Right ventricle myocardium inferior (tissue), 1 donor: ENCODE measurements at regions of chr11 and their contacts with region 1.

Region 1: GRCh38 chr11:78228467-78228866 is 39.7 kb downstream of the USP35 start:
- DNase-seq: no peak
- ATAC-seq: peak; percentile 49

Region 2: DNA sequence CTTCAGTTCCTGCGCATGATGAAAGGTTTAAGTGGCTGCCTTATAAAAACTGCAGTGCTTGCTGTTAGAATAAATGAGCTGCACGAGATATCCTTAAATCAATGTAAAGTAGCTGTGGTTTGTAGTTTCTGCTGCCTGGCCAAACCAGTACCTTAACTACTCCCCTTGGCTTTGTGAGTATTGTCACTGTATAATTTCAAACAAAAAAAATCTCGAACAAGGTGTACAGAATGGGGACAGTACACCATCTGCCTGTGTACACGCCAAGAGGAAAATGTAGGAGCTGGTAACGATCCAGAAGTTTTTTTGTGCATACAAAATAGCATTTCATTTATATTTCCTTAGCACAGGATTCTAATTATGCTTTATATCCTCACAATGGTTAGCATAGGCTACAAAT is 128.2 kb before region 1 on chr11:
- intact Hi-C with region 1: no loop called
- DNase-seq: no peak
- ATAC-seq: no peak

Region 3: DNA sequence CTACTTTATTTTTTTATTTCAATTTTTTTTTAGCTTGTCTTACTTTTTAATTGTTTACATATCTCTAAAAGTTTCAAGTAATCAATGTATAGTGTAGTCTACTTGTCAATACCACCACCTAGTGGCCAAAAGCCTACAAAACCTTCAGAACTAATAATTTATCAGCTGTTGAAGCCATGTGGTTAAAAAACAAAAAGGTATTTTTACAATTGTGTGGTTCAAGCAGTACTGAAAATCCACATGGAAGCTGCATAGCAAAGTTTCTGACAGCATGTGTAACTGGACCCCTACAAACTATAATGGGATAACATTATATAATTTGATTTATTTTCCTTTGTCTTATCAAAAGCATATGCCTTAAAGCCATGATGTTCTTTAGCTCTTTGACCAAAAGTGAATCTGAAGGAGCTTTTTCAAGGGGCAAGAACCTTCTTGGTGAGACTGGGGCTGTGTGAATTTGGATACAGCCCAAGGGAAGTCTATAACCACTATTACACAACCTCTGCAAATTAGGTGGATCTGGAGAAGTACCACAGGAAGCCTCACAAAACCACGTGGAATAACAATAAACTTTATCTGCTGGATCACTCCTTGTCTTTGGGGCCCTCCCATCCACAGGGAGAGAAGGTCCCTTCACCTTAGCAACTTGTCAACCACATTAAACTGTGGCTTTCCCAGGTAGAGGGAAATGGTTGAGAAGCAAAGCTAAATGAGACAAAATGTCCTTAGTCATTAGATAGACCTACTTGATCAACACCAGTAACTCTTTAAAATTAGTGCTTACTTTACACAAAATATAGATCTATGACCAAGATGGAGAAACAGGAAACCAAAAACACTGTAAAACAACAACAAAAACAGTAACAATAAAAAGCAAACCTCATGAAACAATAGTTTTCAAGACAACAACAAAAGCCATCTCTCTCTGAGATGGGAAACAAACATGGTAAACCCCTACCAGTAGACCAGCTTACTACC is 336.3 kb after region 1 on chr11:
- intact Hi-C with region 1: loop called (anchors 2 kb)
- DNase-seq: no peak
- ATAC-seq: no peak